ENCODE measurements at regions of chr11 and their contacts with region 1.

Region 1: DNA sequence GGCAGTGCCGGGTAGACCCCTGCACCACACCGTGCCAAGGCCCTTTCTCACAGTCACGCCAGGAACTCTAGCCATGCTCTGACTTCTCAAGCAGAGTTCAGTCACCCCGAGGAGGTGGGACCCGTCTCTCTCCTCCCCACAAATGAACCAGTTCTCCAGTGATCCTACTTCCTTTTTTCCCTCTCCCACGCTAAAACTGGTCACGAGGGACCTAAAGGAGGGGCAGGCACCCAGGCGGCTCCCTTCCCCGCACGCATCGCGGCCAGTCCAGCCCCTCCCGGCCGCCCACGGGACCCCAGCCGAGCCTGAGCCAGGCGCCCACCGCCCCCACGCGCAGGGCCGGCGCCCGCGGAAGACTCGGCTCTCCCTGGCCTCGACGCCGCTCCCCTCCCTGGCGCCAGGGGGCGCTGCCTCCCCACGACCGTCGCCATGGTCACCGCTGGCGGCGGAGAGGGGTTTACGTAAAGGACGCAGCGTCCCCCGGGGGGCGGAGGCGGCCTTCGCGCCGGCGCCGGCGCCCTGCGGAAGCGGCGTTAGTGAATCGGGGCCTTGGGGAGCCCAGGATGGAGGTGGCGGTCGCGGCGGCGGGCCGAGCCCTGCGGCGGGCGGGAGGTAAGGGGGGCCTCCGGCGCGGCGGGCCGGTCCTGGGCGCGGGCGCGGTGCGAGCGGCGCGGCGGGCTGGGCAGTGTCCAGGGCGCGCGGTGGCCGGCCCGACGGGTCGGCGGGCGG is at the start of gene DAGLA:
- DNase-seq: peak; percentile 83 to 89
- H3K4me3 ChIP-seq: peak within 1 kb of the TSS; percentile 49 to 56 (median 53)
- H3K27ac ChIP-seq: peak within 1 kb of the TSS in 2 of 5 donors; percentile 47 to 54
- H3K4me1 ChIP-seq: peaks cover 26 to 50% (median 43%) of the 10 kb centered on the region in 4 donors
- H3K27me3 ChIP-seq: peaks cover 0 to 52% (median 0%) of the 10 kb centered on the region in 3 donors
- CTCF ChIP-seq: peak in 5 of 7 experiments; percentile 77 to 97 (median 92)
- EP300 ChIP-seq: no peak
- POLR2A ChIP-seq: no peak
- total RNA-seq, gene DAGLA: under 0.01 to 27.2 (median 1.3) TPM

Region 2: DNA sequence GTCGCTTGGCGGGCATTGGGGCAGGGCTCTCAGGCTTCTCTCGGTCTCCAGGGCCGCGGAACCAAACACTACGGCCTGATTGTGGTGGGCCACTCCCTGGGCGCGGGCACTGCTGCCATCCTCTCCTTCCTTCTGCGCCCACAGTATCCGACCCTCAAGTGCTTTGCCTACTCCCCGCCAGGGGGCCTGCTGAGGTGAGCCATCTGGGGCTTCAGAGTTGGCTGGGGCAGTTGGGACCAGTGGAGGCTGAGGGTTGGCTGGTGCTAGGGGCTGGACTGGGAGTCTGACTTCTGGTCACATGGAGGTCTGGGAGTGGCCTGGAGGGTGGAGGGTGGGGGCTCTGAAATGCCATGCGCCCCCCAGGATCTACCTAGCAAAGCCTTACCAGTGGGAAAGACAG is 57.1 kb after region 1 on chr11:
- intact Hi-C with region 1: loop called (anchors 5 kb)
- DNase-seq: no peak
- H3K4me3 ChIP-seq: no peak overlapping the region
- H3K27ac ChIP-seq: no peak overlapping the region
- H3K4me1 ChIP-seq: peaks cover 0 to 16% (median 6%) of the 10 kb centered on the region in 4 donors
- H3K27me3 ChIP-seq: no peaks in the 10 kb centered on the region
- CTCF ChIP-seq: no peak
- EP300 ChIP-seq: no peak
- POLR2A ChIP-seq: no peak